Activated CD4-positive, alpha-beta memory T cell treated with anti-CD3 and anti-CD28 coated beads for 36 hours (primary cell): ENCODE measurements at regions of chr1 and their contacts with region 1.

Region 1: DNA sequence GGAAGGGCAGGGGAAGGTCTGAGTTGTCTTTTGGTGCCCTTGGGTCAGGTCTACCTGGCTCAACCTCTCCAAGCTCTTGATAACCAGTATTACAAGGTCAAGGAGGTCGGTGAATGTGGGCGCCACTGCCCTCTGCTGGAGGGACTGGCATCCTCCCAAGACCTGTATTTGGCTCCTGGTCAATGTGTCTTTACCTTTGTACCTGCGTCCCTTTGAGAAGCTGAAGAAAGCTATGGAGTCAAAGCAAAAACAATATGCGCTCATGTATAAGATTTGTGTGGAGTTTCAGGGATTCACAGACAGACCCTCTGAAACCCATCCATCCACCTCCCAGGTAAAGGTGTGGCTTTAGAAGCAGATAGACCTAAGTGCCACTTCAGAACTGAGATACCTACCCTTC is 61.8 kb upstream of the NBL1 start:
- DNase-seq: peak; percentile 88
- H3K4me3 Mint-ChIP-seq: no peak overlapping the region
- H3K27ac Mint-ChIP-seq: no peak overlapping the region
- H3K4me1 Mint-ChIP-seq: peaks cover 12% of the 10 kb centered on the region
- H3K27me3 Mint-ChIP-seq: no peaks in the 10 kb centered on the region

Region 2: GRCh38 chr1:19044975-19045831 is 537.1 kb before region 1 on chr1:
- CTCF ChIA-PET with region 1: no interaction called
- POLR2A ChIA-PET with region 1: no interaction called
- intact Hi-C with region 1: no loop called
- DNase-seq: peak; percentile 46
- H3K4me3 Mint-ChIP-seq: no peak overlapping the region
- H3K27ac Mint-ChIP-seq: no peak overlapping the region
- H3K4me1 Mint-ChIP-seq: peaks cover 8% of the 10 kb centered on the region
- H3K27me3 Mint-ChIP-seq: peaks cover 11% of the 10 kb centered on the region

Region 3: DNA sequence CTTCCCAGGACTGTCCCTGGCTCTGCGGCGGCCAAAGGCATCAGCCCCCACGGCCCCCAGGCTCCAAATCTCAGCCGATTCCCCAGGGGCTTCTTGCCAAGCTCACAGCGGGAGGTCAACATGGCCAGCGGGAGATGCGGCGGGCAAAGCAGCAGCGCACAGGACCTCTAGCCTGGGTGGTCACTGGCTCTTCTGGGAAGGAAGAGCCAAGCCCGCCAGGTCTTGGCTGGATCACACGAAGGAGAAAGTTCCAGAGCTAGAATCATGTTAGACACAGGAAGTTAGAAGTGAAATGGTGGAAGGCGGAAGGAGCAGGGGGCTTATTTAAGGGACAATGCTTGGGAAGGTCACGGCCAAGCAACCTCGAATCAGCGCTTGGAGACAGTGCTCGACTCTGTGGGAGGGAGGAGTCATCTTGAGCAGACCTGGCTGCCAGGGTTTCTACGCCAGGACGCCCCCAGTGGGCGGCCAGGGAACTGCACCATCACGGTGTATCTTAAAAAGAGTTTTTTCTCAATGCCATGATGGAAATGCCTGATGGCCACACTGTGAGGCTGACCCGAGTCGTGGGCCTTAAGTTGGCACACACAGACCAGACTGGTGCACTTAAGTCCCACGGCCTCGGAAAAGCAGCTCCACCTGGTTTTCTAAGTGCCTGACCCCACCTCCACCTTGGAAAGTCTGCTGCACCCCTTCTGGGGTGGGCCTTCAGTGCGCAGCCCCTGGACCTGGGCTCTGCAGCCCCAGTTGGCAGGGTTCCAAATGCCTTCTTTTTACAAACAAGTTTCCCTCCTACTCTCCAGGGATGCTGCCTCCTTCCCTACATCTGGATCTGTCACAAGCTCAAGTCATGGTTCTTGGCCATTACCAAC is 240.9 kb before region 1 on chr1:
- CTCF ChIA-PET with region 1: interaction called, 53 read pairs
- POLR2A ChIA-PET with region 1: no interaction called
- intact Hi-C with region 1: loop called (anchors 1 kb)
- DNase-seq: peak; percentile 86
- H3K4me3 Mint-ChIP-seq: no peak overlapping the region
- H3K27ac Mint-ChIP-seq: peak overlapping the region; percentile 0
- H3K4me1 Mint-ChIP-seq: peaks cover 18% of the 10 kb centered on the region
- H3K27me3 Mint-ChIP-seq: no peaks in the 10 kb centered on the region

Region 4: DNA sequence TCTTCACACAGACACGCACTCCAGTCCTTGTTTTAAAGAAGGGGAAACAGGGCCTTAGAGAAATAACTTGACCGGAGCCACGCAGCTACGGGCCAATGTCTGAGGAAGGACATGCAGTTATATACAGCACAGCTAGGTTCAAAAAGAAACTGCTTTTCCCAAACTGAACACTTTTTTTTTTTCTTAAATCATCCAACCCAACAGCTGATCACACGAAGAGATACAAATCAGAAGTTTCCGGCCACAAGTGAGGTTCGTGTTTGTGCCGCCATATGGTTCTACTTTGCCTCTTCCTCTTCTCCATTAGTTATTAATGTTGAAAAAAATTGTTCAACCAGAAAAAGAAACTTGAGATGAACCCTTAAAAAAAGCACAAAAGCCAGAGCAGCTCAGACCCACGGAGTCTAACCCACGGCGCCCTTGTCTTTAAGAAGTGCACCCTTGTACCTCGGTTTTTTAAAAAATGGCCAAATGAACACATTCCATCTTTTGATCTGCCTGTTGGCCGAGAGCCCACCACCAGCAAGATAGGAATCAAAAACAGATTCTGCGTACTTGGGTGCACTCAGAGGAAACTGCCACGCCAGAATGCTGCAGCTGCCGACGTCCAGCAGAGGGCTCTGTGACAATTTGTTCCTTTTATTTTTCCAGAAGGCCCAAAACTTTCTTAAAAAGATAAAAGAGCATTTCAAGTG is 191.3 kb before region 1 on chr1:
- CTCF ChIA-PET with region 1: interaction called, 50 read pairs
- POLR2A ChIA-PET with region 1: interaction called, 3 read pairs
- intact Hi-C with region 1: loop called (anchors 1 kb)
- DNase-seq: peak; percentile 69
- H3K4me3 Mint-ChIP-seq: peak overlapping the region; percentile 76
- H3K27ac Mint-ChIP-seq: peak overlapping the region; percentile 94
- H3K4me1 Mint-ChIP-seq: peaks cover 76% of the 10 kb centered on the region
- H3K27me3 Mint-ChIP-seq: no peaks in the 10 kb centered on the region

Region 5: DNA sequence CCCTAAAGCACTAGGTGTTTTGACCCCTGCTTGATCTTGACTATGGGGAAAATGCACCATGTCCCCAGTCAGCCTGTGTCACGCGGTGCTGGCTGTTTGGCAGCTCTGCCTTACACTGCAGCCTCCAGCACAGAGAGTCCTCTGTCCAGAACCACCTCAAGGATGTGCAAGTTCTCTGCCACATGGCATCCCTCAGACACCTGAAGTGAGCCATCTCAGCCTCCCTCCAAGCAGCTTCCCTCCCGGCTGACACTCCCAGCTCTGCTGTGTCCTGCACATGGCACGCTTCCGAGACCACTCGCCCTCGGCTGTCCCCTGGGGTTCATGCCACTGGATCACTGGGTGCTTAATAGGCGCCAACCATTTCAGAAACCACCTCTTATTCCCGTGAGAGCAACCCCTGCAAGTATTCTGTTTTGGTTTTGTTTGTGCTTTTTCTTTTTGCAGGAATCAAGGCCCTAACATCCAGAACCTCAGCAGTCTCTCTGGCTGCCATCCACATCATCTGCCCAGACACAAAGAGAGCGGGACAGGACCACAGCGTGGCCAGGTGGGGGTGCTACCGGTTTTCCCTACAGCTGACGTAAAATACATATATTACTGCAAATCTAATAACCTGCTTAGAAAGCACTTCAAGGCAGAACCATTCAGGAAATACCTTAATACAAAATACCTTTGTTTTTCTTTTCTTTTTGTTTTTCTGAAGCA is 142.7 kb before region 1 on chr1:
- CTCF ChIA-PET with region 1: interaction called, 13 read pairs
- POLR2A ChIA-PET with region 1: no interaction called
- intact Hi-C with region 1: loop called (anchors 5 kb)
- DNase-seq: peak; percentile 46
- H3K4me3 Mint-ChIP-seq: no peak overlapping the region
- H3K27ac Mint-ChIP-seq: peak overlapping the region; percentile 42
- H3K4me1 Mint-ChIP-seq: peaks cover 88% of the 10 kb centered on the region
- H3K27me3 Mint-ChIP-seq: no peaks in the 10 kb centered on the region

Region 6: DNA sequence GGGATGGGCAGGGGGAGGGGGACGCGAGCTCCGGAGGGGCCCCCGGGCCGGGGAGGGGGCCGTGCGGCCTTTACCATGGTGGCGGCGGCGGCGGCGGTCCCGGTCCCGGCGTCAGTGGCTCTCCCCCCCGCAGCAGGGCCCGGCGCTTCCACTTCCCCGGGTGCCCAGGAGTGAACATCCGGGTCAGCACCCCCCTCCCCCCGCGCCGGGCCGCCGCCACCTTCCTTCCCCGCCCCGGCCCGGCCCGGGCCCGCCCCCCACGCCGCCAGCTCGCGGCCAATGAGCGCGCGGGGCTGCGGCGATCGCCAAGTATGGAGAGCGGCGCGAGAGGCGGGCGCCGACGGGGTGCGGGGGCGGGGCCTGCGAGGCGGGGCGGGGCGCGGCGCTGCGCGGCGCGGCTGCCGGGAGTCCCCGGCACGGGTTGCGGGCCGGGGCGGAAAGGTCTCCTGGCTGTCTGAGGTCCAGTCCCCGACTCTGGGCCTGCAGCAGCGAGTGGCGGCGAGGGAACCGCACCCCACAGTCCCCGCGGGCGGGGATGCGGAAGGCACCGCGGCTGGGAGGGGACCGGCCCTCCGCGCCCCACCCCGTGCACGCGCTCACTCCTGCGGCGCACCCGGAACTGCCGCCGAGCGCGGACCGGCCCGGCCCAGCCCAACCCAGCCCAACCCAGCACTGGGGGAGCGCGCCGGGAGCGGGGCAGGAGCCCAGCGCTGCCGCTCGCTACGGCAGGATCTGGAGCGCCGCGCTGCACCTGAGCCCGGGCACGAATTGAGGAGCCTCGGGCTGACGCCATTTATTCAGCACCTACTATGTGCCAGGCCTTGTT is 96.7 kb before region 1 on chr1 and contains the start of gene CAPZB:
- CTCF ChIA-PET with region 1: interaction called, 77 read pairs
- POLR2A ChIA-PET with region 1: no interaction called
- intact Hi-C with region 1: loop called (anchors 2 kb)
- DNase-seq: peak; percentile 95
- H3K4me3 Mint-ChIP-seq: peak within 1 kb of the TSS; percentile 96
- H3K27ac Mint-ChIP-seq: peak within 1 kb of the TSS; percentile 94
- H3K4me1 Mint-ChIP-seq: peaks cover 54% of the 10 kb centered on the region
- H3K27me3 Mint-ChIP-seq: no peaks in the 10 kb centered on the region
- total RNA-seq, gene CAPZB: 388 to 419 TPM

Region 7: GRCh38 chr1:19596714-19597495 is 14.6 kb after region 1 on chr1:
- CTCF ChIA-PET with region 1: interaction called, 16 read pairs
- POLR2A ChIA-PET with region 1: no interaction called
- intact Hi-C with region 1: no loop called
- DNase-seq: peak; percentile 99
- H3K4me3 Mint-ChIP-seq: peak overlapping the region; percentile 92
- H3K27ac Mint-ChIP-seq: peak overlapping the region; percentile 100
- H3K4me1 Mint-ChIP-seq: peaks cover 45% of the 10 kb centered on the region
- H3K27me3 Mint-ChIP-seq: no peaks in the 10 kb centered on the region

Region 8: GRCh38 chr1:19651141-19651737 is 68.9 kb after region 1 on chr1:
- CTCF ChIA-PET with region 1: interaction called, 10 read pairs
- POLR2A ChIA-PET with region 1: no interaction called
- intact Hi-C with region 1: loop called (anchors 5 kb)
- DNase-seq: peak; percentile 71
- H3K4me3 Mint-ChIP-seq: no peak overlapping the region
- H3K27ac Mint-ChIP-seq: no peak overlapping the region
- H3K4me1 Mint-ChIP-seq: peaks cover 34% of the 10 kb centered on the region
- H3K27me3 Mint-ChIP-seq: no peaks in the 10 kb centered on the region